AG04449 (cell line): ENCODE measurements at regions of chr1 and their contacts with region 1.

Region 1: GRCh38 chr1:31348449-31348848 is 24.4 kb downstream of the FABP3 start:
- DNase-seq: no peak
- H3K4me3 ChIP-seq: no peak overlapping the region
- CTCF ChIP-seq: no peak

Region 2: GRCh38 chr1:31335007-31335406 is 13.4 kb before region 1 on chr1:
- CTCF ChIA-PET with region 1: interaction called, 12 read pairs
- POLR2A ChIA-PET with region 1: no interaction called
- DNase-seq: no peak
- H3K4me3 ChIP-seq: no peak overlapping the region
- CTCF ChIP-seq: peak; percentile 31

Region 3: DNA sequence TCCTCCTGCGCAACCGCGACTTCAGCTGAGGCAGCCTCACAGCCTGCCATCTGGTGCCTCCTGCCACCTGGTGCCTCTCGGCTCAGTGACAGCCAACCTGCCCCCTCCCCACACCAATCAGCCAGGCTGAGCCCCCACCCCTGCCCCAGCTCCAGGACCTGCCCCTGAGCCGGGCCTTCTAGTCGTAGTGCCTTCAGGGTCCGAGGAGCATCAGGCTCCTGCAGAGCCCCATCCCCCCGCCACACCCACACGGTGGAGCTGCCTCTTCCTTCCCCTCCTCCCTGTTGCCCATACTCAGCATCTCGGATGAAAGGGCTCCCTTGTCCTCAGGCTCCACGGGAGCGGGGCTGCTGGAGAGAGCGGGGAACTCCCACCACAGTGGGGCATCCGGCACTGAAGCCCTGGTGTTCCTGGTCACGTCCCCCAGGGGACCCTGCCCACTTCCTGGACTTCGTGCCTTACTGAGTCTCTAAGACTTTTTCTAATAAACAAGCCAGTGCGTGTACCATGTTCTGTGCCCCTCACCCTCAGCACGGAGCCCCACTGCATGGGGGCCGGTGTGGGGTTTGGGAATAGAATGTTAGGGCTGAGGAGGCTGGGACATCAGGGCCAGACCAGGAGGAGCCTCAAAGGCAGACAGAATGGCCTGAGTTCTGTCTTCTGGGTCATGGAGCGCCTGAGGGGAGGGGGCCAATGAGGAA is 85.9 kb after region 1 on chr1:
- CTCF ChIA-PET with region 1: no interaction called
- POLR2A ChIA-PET with region 1: no interaction called
- DNase-seq: no peak
- H3K4me3 ChIP-seq: no peak overlapping the region
- CTCF ChIP-seq: no peak